ENCODE measurements at regions of chr12 and their contacts with region 1.

Region 1: GRCh38 chr12:108129017-108129812 is at the start of gene WSCD2:
- DNase-seq: peak; percentile 67 to 85
- H3K4me3 ChIP-seq: peak within 1 kb of the TSS; percentile 50 to 73 (median 66)
- H3K27ac ChIP-seq: no peak within 1 kb of the TSS
- H3K4me1 ChIP-seq: peaks cover 0 to 19% (median 2%) of the 10 kb centered on the region in 4 experiments; a peak in 4 of 7 replicates
- H3K27me3 ChIP-seq: peaks cover 0 to 14% (median 6%) of the 10 kb centered on the region in 4 experiments; a peak in 3 of 7 replicates
- CTCF ChIP-seq: peak; percentile 69 to 96 (median 69)
- EP300 ChIP-seq: no peak
- POLR2A ChIP-seq: 0 out of 3 replicates have a peak, but pooled peaks of 1 of the 2 experiments have one; percentile 43
- RAD21 ChIP-seq: peak; percentile 59 to 79
- total RNA-seq, gene WSCD2: 1.7 and 2.2 TPM in 2 replicates

Region 2: DNA sequence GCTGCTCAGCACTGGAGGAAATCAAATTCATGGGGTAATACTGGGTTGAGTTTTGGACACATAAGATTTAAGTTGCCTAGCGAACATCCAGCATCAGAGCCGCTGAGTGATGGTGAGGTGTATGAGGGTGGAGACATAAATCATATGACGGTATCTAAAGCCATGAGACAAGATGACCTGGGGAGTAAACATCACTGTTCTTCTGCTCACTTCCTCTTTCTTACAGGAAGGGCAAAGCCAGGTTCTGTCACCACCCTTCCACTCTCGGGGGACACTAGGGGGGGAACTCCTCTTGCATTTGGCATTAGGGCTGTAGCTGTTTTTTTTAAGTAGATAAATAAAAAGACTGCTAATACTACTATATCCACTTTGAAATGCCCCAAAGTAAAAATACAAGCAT is 392.3 kb before region 1 on chr12:
- CTCF ChIA-PET with region 1: no interaction called
- POLR2A ChIA-PET with region 1: no interaction called
- DNase-seq: no peak
- H3K4me3 ChIP-seq: no peak overlapping the region
- H3K27ac ChIP-seq: no peak overlapping the region
- H3K4me1 ChIP-seq: no peaks in the 10 kb centered on the region
- H3K27me3 ChIP-seq: no peaks in the 10 kb centered on the region
- CTCF ChIP-seq: no peak
- EP300 ChIP-seq: no peak
- POLR2A ChIP-seq: no peak
- RAD21 ChIP-seq: no peak

Region 3: DNA sequence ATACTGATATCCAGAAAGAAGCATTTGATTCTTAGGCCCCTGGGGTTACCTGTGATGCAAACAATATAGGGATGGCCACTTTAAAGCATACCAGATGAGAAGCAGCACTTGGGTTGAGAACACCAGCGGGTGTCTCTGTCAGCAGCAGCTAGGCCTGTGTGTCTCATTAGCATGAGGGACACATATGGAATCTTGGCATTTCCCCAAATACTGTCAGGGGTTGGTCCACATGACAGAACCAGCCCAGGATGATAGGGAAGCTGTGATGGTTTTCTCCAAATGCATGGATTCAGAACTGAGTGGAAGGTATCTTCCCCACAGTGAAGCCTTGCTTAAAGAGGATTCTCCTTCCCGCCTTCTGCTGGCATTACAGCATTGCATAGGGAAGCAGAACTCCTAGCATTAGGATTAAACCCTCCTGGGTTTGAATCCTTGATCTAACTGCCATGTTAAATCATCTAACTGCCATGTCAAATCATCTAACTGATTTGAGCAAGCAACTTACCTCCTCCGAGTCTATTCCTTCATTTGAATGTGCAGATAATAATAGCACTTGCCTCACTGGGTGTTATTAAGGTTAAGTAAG is 111.7 kb before region 1 on chr12:
- CTCF ChIA-PET with region 1: no interaction called
- POLR2A ChIA-PET with region 1: no interaction called
- DNase-seq: no peak
- H3K4me3 ChIP-seq: no peak overlapping the region
- H3K27ac ChIP-seq: no peak overlapping the region
- H3K4me1 ChIP-seq: no peaks in the 10 kb centered on the region
- H3K27me3 ChIP-seq: no peaks in the 10 kb centered on the region
- CTCF ChIP-seq: no peak
- EP300 ChIP-seq: no peak
- POLR2A ChIP-seq: no peak
- RAD21 ChIP-seq: no peak

Region 4: DNA sequence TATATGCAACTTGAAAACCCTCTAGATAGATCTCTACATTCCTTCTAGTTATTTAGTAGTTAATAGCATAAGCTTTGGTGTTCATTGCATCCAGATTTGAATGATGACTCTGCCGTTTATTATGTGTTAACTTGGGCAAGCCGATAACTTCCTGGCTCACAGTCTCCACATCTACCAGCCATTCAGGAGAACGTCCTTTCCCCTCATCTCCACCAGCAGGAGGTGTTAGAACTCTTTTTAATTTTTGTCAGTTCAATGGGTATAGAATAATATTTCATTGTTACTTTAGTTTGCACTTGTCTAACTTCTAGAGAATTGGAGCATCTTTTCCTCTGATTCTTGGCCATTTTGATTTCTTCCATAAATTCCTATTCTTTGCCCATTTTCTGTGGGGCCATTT is 30.1 kb before region 1 on chr12:
- CTCF ChIA-PET with region 1: interaction called, 15 read pairs
- POLR2A ChIA-PET with region 1: no interaction called
- DNase-seq: no peak
- H3K4me3 ChIP-seq: no peak overlapping the region
- H3K27ac ChIP-seq: no peak overlapping the region
- H3K4me1 ChIP-seq: peaks cover 0 to 8% (median 0%) of the 10 kb centered on the region in 4 experiments; a peak in 1 of 7 replicates
- H3K27me3 ChIP-seq: no peaks in the 10 kb centered on the region
- CTCF ChIP-seq: peak; percentile 14 to 50 (median 28); a peak in 3 of 4 replicates
- EP300 ChIP-seq: no peak
- POLR2A ChIP-seq: no peak
- RAD21 ChIP-seq: peak; percentile 59 to 63

Region 5: GRCh38 chr12:108146035-108146893 is 17.0 kb after region 1 on chr12:
- CTCF ChIA-PET with region 1: interaction called, 64 read pairs
- POLR2A ChIA-PET with region 1: interaction called, 3 read pairs
- DNase-seq: no peak
- H3K4me3 ChIP-seq: no peak overlapping the region
- H3K27ac ChIP-seq: no peak overlapping the region
- H3K4me1 ChIP-seq: peaks cover 3 to 11% (median 7%) of the 10 kb centered on the region in 4 experiments; a peak in 6 of 7 replicates
- H3K27me3 ChIP-seq: no peaks in the 10 kb centered on the region
- CTCF ChIP-seq: no peak
- EP300 ChIP-seq: no peak
- POLR2A ChIP-seq: no peak
- RAD21 ChIP-seq: no peak

Region 6: DNA sequence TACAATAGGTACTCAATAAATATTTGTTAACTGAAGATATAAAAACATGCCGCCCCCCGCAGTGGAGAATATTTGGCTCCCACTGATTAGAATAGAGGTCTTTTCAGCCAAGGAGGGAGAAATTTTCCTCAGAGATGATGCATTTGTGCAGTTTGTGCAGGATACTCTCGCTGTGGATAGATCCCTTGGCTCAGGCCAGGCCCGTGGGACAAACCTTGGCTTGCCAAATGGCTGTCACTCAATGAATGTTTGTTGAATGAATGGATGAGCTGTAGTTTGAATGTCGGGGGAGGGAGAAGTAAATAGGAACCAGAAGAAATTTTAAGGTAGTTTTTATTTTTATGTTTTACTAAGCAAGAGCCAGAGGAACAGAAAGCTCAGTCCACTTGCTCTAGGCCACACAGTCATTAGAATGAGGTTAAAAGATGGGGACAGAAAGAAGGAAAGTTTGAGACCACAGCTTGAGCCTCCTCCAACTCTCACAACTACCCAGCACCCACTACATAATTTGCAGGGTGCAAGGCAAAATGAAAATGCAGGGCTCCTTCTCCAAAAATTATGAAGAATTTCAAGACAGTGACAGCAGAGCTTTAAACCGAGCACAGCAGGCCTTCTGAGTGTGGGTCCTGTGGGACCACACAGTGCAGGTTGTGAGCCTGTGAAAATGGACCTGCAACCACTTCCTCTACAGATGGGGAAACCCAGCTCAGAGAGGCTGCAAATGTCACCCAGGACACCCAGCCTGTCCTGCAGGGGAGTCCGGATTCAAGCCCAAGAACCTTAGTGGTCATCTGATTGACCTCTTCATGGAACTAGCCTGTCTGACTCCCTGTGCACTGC is 51.3 kb after region 1 on chr12:
- CTCF ChIA-PET with region 1: interaction called, 24 read pairs
- POLR2A ChIA-PET with region 1: no interaction called
- DNase-seq: no peak
- H3K4me3 ChIP-seq: no peak overlapping the region
- H3K27ac ChIP-seq: no peak overlapping the region; the same call in 1 of the 2 replicates
- H3K4me1 ChIP-seq: peaks cover 0 to 4% (median under 1%) of the 10 kb centered on the region in 4 experiments; a peak in 3 of 7 replicates
- H3K27me3 ChIP-seq: no peaks in the 10 kb centered on the region
- CTCF ChIP-seq: no peak
- EP300 ChIP-seq: no peak
- POLR2A ChIP-seq: no peak
- RAD21 ChIP-seq: no peak